ENCODE measurements at regions of chr3 and their contacts with region 1.

Region 1: GRCh38 chr3:27312044-27312668 is 57.0 kb downstream of the NEK10 start:
- DNase-seq: no peak
- ATAC-seq: peak in 5 of 8 donors; percentile 47 to 82 (median 64)
- H3K4me3 ChIP-seq: no peak overlapping the region
- H3K27ac ChIP-seq: no peak overlapping the region
- H3K4me1 ChIP-seq: no peaks in the 10 kb centered on the region
- H3K27me3 ChIP-seq: no peaks in the 10 kb centered on the region
- CTCF ChIP-seq: peak; percentile 71 to 87 (median 81)

Region 2: DNA sequence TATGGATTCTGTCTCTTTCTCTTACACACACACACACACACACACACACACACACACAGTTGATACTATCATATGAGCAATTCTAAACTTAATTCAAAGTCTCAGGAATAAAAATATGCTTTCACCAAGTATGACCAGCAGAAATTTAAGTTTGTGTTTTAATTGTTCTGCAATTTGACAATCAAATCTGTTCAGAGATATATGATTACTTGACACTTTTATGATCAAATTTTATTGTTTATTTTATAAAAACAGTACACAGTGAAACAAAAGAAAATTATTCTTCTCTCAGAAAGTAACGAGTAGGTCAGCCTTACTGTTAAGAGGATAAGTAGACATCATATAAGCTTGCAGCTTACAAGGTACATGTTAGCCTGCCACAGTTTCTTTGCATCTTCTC is 57.3 kb before region 1 on chr3:
- intact Hi-C with region 1: no loop called
- DNase-seq: no peak
- ATAC-seq: no peak
- H3K4me3 ChIP-seq: no peak overlapping the region
- H3K27ac ChIP-seq: no peak overlapping the region
- H3K4me1 ChIP-seq: no peaks in the 10 kb centered on the region
- H3K27me3 ChIP-seq: no peaks in the 10 kb centered on the region
- CTCF ChIP-seq: no peak

Region 3: DNA sequence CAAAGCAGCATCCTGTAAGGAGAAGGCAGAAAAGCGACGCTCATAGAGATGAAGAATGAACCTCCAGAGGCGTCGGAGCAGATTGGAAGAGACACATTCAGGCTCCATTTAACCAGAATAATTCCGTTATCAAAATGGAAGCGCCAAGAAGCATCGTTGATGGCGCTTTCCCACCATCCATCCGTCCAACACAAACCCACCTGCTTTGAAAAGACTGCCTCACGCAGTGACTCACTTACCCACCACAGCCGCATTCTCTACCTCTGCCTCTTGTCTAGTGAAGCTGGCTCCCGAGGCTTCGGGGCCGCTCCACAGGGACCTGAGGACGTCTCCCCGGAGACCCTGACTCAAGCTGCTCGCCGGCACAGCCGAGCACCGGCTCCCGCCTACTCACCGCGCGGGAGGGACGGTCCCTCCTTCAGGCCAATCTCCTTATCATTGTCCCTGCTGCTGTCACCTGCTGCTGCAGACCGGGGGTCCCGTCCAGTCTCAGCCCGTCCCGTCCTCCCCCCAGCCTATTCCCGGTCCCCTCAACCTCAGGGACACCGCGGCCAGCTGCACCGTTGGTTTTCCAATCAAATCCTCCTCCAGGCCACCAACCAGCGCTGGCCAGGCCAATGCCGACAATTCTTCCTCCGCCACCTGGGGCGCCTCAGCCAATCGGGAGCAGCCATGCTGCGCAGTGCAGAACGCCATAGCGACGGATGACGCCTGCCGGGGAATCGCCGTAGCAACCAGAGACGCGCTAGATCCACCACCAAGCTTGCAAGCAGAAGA is 56.9 kb after region 1 on chr3 and contains the start of gene NEK10:
- intact Hi-C with region 1: loop called in 1 of 10 experiments (anchors 10 kb)
- DNase-seq: peak; percentile 88 to 89
- ATAC-seq: peak; percentile 99 to 100 (median 100)
- H3K4me3 ChIP-seq: peak within 1 kb of the TSS; percentile 31 to 70 (median 60)
- H3K27ac ChIP-seq: no peak within 1 kb of the TSS
- H3K4me1 ChIP-seq: peaks cover 0 to 13% (median 6%) of the 10 kb centered on the region in 9 donors
- H3K27me3 ChIP-seq: no peaks in the 10 kb centered on the region
- CTCF ChIP-seq: peak in 1 of 9 donors; percentile 14
- total RNA-seq, gene NEK10: 3.1 to 17.5 (median 8.6) TPM

Region 4: DNA sequence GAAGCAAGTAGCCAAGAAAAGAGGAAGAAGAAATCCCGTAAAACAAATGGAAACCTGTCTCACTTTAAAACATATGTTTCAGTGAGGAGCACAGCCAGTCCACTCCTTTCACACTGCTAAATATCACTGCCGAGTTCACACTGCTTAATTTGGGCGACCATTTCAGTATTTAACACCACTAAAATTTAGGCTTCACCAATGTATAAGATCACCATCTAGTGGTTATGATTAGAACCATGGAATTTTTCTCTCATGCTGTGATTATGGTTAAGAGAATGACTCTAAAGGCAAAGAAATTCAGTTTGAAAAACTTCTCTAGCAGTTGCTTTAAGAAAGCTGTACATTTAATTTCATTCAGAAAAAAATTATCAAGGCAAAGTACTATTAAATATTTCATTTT is 155.4 kb after region 1 on chr3:
- intact Hi-C with region 1: loop called (anchors 1 to 10 kb)
- DNase-seq: no peak
- ATAC-seq: peak in 6 of 8 donors; percentile 38 to 78 (median 66)
- H3K4me3 ChIP-seq: no peak overlapping the region
- H3K27ac ChIP-seq: peak overlapping the region in 1 of 10 donors; percentile 3
- H3K4me1 ChIP-seq: peaks cover 0 to 15% (median 3%) of the 10 kb centered on the region in 9 donors
- H3K27me3 ChIP-seq: no peaks in the 10 kb centered on the region
- CTCF ChIP-seq: peak in 8 of 9 donors; percentile 21 to 67 (median 55)

Region 5: DNA sequence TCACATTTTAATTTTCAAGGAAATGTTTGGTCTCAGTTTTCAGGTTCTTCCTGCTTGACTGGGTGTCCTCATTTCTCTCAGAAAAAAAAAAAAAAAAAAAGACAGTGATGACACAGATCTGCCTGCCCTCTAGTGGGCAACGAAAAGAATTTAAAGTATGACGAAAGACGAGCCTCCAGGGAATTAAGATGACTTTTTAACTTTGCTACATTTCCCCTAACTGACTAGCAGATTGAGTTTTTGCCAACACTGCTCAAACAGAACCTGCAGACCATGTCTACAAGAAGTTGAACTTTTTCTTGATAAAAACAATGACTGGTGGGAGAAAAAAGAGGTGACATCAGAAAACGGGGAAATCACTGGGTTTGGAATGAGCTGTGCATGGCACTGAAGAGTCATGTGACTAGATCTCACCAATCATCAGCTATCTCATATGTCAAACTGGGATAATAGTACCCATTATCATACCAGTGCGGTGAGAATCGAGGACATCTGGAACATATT is 369.1 kb after region 1 on chr3:
- intact Hi-C with region 1: loop called in 9 of 10 experiments (anchors 1 to 10 kb)
- DNase-seq: peak in 1 of 2 donors; percentile 38
- ATAC-seq: peak in 7 of 8 donors; percentile 20 to 67 (median 51)
- H3K4me3 ChIP-seq: peak overlapping the region in 2 of 10 donors; percentile 19 to 26
- H3K27ac ChIP-seq: peak overlapping the region in 2 of 10 donors; percentile 48 to 51
- H3K4me1 ChIP-seq: peaks cover 0 to 13% (median 5%) of the 10 kb centered on the region in 9 donors
- H3K27me3 ChIP-seq: no peaks in the 10 kb centered on the region
- CTCF ChIP-seq: peak; percentile 31 to 71 (median 65)

Measured in heart right ventricle (tissue), 16 donors.